PC-3 (cell line): ENCODE measurements at regions of chr11 and their contacts with region 1.

Region 1: DNA sequence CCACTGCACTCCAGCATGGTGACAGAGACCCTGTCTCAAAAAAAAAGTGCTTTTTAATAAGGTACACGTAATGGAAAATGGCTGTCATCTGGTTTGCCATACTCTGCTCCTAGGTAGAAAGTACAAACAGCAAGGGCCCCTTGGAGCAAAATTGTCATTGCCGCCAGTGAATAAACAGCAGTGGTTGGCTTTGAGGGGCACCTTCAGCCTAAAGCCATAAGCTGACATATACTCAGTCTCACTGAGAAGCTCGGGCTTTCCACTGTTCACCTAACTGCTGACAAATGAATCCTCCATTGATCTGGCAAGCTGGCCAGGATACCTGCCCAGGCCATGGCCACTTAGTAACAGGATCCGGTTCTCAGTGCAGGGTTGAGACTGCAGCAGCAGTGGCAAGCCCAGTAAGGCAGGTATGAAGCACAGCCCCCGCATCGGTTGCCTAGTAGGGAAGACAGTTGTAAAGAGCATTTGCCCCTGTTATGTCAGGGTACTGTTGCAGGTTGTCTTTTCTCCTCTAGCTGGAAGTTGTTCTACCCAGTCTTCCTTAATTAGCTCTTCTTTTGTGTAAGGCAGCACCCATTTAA is 38.8 kb downstream of the MARK2 start:
- DNase-seq: no peak
- ATAC-seq: no peak
- H3K4me3 ChIP-seq: no peak overlapping the region
- H3K27ac ChIP-seq: no peak overlapping the region
- H3K4me1 ChIP-seq: peaks cover 23% of the 10 kb centered on the region
- H3K27me3 ChIP-seq: no peaks in the 10 kb centered on the region
- CTCF ChIP-seq: no peak

Region 2: GRCh38 chr11:63395697-63396096 is 482.1 kb before region 1 on chr11:
- CTCF ChIA-PET with region 1: no interaction called
- POLR2A ChIA-PET with region 1: no interaction called
- intact Hi-C with region 1: no loop called
- DNase-seq: no peak
- ATAC-seq: no peak
- H3K4me3 ChIP-seq: no peak overlapping the region
- H3K27ac ChIP-seq: no peak overlapping the region
- H3K4me1 ChIP-seq: no peaks in the 10 kb centered on the region
- H3K27me3 ChIP-seq: peaks cover 63% of the 10 kb centered on the region
- CTCF ChIP-seq: no peak

Region 3: DNA sequence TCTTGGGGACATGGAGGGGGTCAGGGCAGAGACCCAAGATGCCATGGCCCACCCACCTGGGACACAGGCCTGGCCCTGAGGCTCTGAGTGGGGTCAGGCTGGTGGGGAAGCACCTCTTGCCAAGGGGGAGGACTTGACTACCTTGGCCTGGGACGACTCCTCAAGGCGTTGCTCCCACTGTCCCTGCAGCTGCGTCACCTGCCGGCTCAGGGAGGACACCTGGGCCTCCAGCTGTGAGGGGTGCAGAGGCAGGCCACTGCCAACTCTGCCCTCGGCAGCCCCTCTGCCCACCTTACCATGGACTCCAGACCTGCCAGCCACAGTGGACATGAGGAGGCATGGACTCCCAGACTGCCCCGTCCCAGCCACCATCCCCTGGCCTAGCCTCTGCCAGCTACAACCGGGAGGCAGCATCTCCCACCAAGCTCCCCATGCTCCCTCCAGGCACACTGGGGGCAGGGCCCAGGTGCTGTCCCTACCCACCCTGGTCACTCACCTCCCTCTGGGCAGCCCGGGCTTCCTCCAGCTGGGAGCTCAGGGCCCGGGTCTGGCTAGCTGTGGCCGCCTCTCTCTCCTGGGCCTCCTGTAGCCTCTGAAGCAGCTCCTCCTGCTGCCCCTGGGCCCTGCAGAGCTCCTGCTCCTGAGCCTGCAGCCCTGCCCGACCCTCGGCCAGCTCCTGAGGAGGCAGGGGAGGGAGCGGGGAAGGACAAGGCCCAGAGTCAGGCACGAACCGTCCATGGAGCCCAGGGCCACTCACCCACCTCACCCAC is 958.1 kb after region 1 on chr11:
- CTCF ChIA-PET with region 1: interaction called, 14 read pairs
- POLR2A ChIA-PET with region 1: no interaction called
- intact Hi-C with region 1: no loop called
- DNase-seq: no peak
- ATAC-seq: peak; percentile 22
- H3K4me3 ChIP-seq: no peak overlapping the region
- H3K27ac ChIP-seq: 0 out of 2 replicates have a peak overlapping the region, but pooled peaks have one; percentile 9
- H3K4me1 ChIP-seq: peaks cover 16% of the 10 kb centered on the region
- H3K27me3 ChIP-seq: no peaks in the 10 kb centered on the region
- CTCF ChIP-seq: no peak